ENCODE measurements at regions of chr7 and their contacts with region 1.

Region 1: GRCh38 chr7:76020031-76020714 is 25.8 kb upstream of the TMEM120A start:
- DNase-seq: peak; percentile 75 to 87 (median 80)
- ATAC-seq: peak; percentile 52 to 86 (median 80)
- H3K4me3 ChIP-seq: no peak overlapping the region
- H3K27ac ChIP-seq: no peak overlapping the region
- H3K4me1 ChIP-seq: peaks cover 0 to 27% (median 7%) of the 10 kb centered on the region in 12 donors
- H3K27me3 ChIP-seq: no peaks in the 10 kb centered on the region
- CTCF ChIP-seq: peak; percentile 85 to 95 (median 91)
- POLR2A ChIP-seq: no peak

Region 2: DNA sequence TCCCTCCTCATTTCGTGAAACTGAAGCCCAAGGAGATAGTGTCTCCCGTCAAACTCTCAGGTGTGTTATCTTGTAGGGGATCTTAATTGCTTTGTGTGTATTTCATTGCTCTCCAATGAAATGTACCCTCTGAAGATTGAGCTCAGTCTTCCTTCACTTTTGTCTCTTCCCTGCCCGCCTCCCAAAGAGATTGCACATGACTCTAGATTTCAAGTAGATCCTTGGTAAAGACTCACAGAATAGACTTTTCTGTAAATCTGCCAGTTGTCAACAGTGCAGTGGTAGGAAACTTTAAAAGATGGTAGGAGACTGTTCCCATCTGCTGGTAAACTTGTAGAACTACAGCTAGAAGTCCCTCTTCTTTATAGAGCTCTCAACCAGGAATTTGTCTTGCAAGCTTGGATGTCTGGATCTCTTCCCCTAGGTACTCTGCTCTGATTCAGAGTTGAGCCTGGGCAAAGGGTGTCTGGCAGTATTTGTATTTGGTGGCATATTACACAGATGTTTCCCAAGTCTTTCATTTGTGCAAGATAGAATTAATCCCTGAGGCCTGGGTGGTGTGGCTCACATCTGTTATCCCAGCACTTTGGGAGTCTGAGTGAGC is 257.8 kb before region 1 on chr7:
- intact Hi-C with region 1: loop called in 1 of 10 experiments (anchors 10 kb)
- DNase-seq: no peak
- ATAC-seq: peak; percentile 55 to 91 (median 88)
- H3K4me3 ChIP-seq: no peak overlapping the region
- H3K27ac ChIP-seq: no peak overlapping the region
- H3K4me1 ChIP-seq: peaks cover 0 to 4% (median 0%) of the 10 kb centered on the region in 12 donors
- H3K27me3 ChIP-seq: no peaks in the 10 kb centered on the region
- CTCF ChIP-seq: peak; percentile 54 to 84 (median 77)
- POLR2A ChIP-seq: no peak

Region 3: GRCh38 chr7:75789361-75789924 is 230.7 kb before region 1 on chr7:
- intact Hi-C with region 1: loop called in 1 of 10 experiments (anchors 10 kb)
- DNase-seq: no peak
- ATAC-seq: no peak
- H3K4me3 ChIP-seq: no peak overlapping the region
- H3K27ac ChIP-seq: peak overlapping the region in 1 of 12 donors; percentile 19
- H3K4me1 ChIP-seq: peaks cover 0 to 14% (median 4%) of the 10 kb centered on the region in 12 donors
- H3K27me3 ChIP-seq: no peaks in the 10 kb centered on the region
- CTCF ChIP-seq: no peak
- POLR2A ChIP-seq: no peak

Region 4: DNA sequence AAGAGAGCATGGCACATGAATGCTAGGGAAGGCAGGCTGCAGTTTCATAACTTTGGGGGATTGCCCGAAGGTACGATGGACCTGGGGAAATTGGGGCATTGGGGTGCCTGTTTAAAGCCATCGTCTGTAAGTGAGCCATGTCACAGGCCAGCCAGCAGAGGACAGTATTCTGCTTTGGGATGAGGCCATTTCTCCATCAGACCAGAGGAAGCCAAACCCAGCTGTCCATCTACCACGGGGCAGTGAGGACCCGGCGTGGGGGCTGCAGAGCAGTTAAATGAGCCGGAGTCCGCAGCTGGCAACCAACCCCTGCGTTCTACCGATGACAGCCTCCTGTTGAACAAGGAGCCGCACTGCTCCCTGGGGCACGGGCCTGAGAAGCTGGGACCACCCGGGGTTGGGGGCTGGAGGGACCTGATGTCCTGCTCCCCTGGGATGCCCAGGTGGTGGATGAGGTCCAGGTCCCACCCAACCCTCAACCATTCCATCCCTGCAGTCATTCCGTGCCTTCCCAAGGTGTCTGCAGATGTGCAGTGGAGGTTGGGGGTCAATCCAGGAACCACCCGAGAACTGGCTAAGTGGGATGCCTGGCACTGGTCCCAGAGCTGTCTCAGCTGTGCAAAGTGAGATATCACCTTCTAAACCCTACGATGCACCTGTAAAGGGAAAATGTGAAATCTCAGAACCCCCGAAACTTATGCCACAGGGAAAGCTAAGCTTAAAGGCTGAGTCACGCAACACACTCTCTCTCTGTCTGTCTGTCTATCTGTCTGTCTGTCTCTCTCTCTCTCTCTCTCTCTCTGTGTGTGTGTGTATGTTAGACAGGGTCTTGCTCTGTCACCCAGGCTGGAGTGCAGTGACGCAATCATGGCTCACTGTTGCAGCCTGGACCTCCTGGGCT is 153.4 kb before region 1 on chr7:
- intact Hi-C with region 1: loop called (anchors 1 to 2 kb)
- DNase-seq: peak in 4 of 5 donors; percentile 50 to 67 (median 66)
- ATAC-seq: peak; percentile 77 to 93 (median 91)
- H3K4me3 ChIP-seq: no peak overlapping the region
- H3K27ac ChIP-seq: no peak overlapping the region
- H3K4me1 ChIP-seq: peaks cover 0 to 15% (median 3%) of the 10 kb centered on the region in 12 donors
- H3K27me3 ChIP-seq: no peaks in the 10 kb centered on the region
- CTCF ChIP-seq: peak; percentile 83 to 96 (median 91)
- POLR2A ChIP-seq: no peak

Region 5: GRCh38 chr7:76069238-76069638 is 49.1 kb after region 1 on chr7:
- intact Hi-C with region 1: no loop called
- DNase-seq: peak; percentile 33 to 90 (median 78)
- ATAC-seq: peak; percentile 87 to 93 (median 89)
- H3K4me3 ChIP-seq: no peak overlapping the region
- H3K27ac ChIP-seq: peak overlapping the region in 4 of 12 donors; percentile 64 to 87 (median 74)
- H3K4me1 ChIP-seq: peaks cover 0 to 33% (median 6%) of the 10 kb centered on the region in 12 donors
- H3K27me3 ChIP-seq: no peaks in the 10 kb centered on the region
- CTCF ChIP-seq: no peak
- POLR2A ChIP-seq: no peak

Region 6: DNA sequence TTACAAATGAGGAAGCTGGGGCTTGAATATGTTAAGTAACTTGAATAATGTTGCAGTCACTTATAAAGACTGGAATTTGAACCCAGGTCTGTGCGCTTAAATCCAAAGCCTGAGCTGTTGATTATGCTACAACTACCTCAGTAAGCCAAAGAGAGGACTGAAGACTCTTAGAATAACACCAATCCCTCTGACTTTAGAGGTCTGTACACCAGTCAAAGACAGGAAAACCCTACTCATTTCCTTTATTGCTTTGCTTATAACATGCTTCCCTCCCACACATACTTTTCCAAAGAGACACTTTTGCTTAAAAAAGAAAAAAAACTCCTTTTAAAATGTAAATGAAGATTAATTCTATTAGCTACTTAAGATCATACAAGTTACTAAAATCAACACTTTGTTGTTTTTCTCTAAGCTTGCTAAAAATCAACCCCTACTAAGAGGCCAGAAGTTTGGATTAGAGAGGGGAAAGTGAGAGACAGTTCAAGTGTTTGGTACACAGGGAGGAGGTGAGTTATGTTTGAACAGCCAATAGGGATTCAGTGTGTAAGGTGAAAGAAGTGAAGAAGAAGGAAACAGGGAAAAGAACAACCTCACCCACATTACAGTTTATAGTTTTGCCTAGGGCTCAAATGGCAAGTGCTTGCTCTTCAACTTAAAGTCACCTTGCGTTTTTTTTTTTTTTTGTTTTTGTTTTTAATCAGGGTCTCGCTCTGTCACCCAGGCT is 102.5 kb after region 1 on chr7:
- intact Hi-C with region 1: no loop called
- DNase-seq: no peak
- ATAC-seq: no peak
- H3K4me3 ChIP-seq: no peak overlapping the region
- H3K27ac ChIP-seq: no peak overlapping the region
- H3K4me1 ChIP-seq: no peaks in the 10 kb centered on the region
- H3K27me3 ChIP-seq: peaks cover 0 to 7% (median 0%) of the 10 kb centered on the region in 9 donors
- CTCF ChIP-seq: no peak
- POLR2A ChIP-seq: no peak

Region 7: GRCh38 chr7:76142861-76143260 is 122.7 kb after region 1 on chr7:
- intact Hi-C with region 1: no loop called
- DNase-seq: no peak
- ATAC-seq: peak in 1 of 4 donors; percentile 36
- H3K4me3 ChIP-seq: no peak overlapping the region
- H3K27ac ChIP-seq: no peak overlapping the region
- H3K4me1 ChIP-seq: peaks cover 0 to 7% (median 0%) of the 10 kb centered on the region in 12 donors
- H3K27me3 ChIP-seq: no peaks in the 10 kb centered on the region
- CTCF ChIP-seq: no peak
- POLR2A ChIP-seq: no peak